Cardiac septum (tissue), 1 donor: ENCODE measurements at regions of chr12 and their contacts with region 1.

Region 1: GRCh38 chr12:1939801-1940607 is 21.6 kb upstream of the CACNA2D4 start:
- DNase-seq: peak; percentile 92

Region 2: DNA sequence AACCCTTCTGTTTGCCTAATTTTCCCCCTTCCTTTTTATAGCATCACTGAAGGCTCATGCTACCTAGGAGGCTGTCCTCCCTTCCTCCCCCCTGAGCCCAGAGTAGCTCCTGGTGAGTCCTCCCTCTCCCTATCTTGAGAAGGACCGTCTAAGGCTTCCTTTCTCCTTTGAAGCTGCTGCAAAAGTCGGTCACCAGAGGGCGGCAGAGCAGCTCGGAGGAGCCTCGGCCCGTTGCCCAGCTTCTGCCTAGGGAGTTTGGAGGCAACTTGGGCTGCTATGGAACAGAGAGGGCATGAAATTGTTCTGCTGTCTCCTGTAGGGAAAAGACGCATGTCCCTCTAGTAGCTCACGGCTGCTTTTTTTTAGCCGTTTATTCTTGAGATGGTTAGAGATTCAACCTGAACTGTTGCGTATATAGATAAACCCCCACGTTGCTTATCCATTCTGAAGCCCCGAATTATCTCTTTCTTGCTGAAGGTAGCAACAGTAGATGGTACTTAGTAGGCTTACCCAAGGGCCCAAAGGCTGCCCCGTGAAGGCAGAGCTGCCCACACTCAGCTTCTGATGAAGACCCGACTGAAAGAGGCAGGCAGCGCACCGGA is 305.3 kb before region 1 on chr12:
- intact Hi-C with region 1: loop called (anchors 5 kb)
- DNase-seq: peak; percentile 90

Region 3: DNA sequence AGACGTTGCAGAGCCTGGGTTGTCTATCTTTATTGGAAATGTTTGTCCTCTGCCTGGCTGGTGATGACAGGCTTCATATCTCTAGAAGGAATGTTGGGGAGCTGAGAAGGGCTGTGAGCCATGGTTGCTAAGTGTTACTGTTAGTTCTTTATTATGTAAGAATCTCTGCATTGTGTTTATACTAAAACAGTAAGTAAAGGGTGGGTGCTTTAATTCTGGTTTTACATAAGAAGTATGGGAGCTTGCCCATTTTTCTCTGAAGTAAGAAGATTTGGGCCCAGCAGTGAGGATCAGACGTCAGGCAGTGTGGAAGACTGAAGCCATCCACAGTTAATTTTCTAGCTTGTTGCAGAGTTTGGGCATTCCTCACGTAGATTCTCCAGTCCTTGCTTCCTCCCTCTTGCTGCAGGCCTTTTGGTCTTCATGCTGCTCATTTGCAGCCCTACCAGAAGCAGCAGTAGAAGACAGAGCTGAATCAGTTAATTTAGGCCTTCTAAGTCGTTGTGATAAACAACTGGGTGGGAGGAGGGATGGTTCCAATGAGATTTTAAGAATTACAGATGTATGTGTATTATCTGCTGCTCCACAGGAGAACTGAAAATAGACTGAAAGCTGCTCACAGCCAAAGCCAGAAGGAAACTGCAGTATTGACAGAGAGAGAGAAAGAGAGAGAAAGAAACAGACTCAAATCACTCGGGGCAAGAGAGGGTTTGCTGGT is 289.6 kb before region 1 on chr12:
- intact Hi-C with region 1: loop called (anchors 5 kb)
- DNase-seq: no peak

Region 4: GRCh38 chr12:1795785-1796514 is 144.1 kb before region 1 on chr12:
- intact Hi-C with region 1: loop called (anchors 1 kb)
- DNase-seq: peak; percentile 97

Region 5: DNA sequence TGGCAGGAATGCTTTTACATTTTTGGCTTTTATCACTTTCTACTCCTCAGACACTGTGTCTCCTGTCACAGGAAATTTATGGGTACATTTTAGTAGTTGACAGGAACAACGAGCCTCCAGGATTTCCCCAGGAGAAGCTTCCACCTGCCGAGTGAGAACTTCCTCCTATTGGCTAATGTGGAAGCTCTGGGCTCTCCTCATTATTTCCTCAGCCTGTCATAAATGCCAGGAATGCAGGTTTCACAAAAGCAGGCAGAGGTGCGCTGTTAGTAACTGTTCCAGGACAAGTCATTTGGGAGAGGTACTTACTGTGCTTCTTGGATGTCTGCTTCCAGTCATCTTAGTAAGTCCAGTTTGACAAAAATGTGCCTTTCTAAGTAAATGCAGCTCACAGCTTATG is 83.4 kb after region 1 on chr12:
- intact Hi-C with region 1: no loop called
- DNase-seq: no peak